CD8-positive, alpha-beta T cell (primary cell): ENCODE measurements at regions of chr19 and their contacts with region 1.

Region 1: DNA sequence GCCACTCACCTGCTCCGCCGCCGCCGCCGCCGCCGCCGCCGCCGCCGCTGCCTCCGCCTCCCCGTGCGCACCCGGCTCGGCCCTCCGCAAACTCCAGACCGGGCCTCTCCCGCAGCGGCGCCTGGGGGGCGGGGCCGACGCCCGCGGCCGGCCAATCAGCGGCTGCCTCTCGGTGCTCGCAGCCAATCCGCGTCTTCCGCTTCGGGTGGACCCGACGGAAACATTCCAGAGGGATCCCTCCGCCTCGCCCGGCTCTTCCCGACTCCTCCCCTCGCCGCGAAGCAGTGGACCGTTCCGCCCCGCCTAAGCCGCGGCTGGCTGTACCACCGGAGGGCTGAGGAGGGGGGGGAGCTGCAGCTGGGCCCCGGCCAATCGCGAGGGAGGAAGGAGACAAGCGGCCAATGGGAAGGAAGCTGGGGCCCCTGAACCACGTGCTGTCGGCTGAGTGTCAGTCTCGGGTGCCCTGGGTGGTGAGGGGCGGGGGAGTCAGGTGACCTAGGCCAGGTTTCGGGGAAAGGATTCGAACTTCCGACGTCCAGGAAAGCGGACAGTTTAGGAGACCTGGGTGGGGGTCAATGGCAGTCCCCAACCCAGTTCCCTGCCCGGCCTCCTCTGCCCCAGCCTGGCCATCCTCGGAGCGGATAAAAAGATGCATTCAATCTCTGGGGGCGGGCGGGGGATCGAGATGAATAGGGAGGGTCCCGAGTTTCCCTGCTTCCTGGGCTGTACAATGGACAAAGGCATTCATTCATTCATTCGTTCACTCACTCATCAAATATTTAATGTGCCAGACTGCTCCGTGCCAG is at the start of gene GIPC1:
- DNase-seq: peak; percentile 53 to 89 (median 80)
- ATAC-seq: peak; percentile 86
- H3K4me3 ChIP-seq: peak within 1 kb of the TSS; percentile 62 to 97
- H3K4me3 Mint-ChIP-seq: peak within 1 kb of the TSS; percentile 81
- H3K27ac ChIP-seq: peak within 1 kb of the TSS; percentile 42 to 58
- H3K27ac Mint-ChIP-seq: peak within 1 kb of the TSS; percentile 90
- H3K4me1 ChIP-seq: peaks cover 19% of the 10 kb centered on the region
- H3K4me1 Mint-ChIP-seq: peaks cover 24% of the 10 kb centered on the region
- H3K27me3 ChIP-seq: no peaks in the 10 kb centered on the region
- H3K27me3 Mint-ChIP-seq: no peaks in the 10 kb centered on the region
- CTCF ChIP-seq: no peak
- total RNA-seq, gene GIPC1: 15.6 to 16.0 TPM

Region 2: DNA sequence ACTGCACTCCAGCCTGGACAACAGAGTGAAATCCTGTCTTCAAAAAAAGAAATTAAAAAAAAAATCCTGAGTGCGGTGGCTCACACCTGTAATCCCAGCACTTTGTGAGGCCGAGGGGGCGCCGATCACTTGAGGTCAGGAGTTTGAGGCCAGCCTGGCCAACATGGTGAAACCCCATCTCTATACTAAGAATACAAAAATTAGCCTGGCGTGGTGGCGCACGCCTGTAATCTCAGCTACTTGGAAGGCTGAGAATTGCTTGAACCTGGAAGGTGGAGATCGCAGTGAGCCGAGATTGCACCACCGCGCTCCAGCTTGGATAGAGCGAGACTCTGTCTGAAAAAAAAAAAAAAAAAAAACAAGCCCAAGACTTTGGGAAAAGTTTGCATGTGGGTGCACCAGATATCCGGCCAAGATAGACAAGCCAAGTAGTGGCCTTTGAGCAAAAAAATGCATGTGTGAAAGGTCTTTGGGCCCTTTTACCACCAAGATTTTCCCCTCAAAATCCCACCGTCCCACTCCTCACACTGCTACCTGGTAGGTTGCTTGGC is 16.3 kb after region 1 on chr19:
- CTCF ChIA-PET with region 1: interaction called, 3 read pairs
- POLR2A ChIA-PET with region 1: interaction called, 26 read pairs
- intact Hi-C with region 1: loop called (anchors 1 kb)
- DNase-seq: no peak
- ATAC-seq: no peak
- H3K4me3 ChIP-seq: no peak overlapping the region
- H3K4me3 Mint-ChIP-seq: no peak overlapping the region
- H3K27ac ChIP-seq: no peak overlapping the region
- H3K27ac Mint-ChIP-seq: peak overlapping the region; percentile 41
- H3K4me1 ChIP-seq: peaks cover 48% of the 10 kb centered on the region
- H3K4me1 Mint-ChIP-seq: peaks cover 58% of the 10 kb centered on the region
- H3K27me3 ChIP-seq: no peaks in the 10 kb centered on the region
- H3K27me3 Mint-ChIP-seq: no peaks in the 10 kb centered on the region
- CTCF ChIP-seq: no peak

Region 3: GRCh38 chr19:14536926-14537692 is 40.9 kb after region 1 on chr19:
- CTCF ChIA-PET with region 1: no interaction called
- POLR2A ChIA-PET with region 1: no interaction called
- intact Hi-C with region 1: no loop called
- DNase-seq: peak in 4 of 9 experiments; percentile 49 to 67 (median 56)
- ATAC-seq: peak; percentile 80
- H3K4me3 ChIP-seq: no peak overlapping the region
- H3K4me3 Mint-ChIP-seq: no peak overlapping the region
- H3K27ac ChIP-seq: no peak overlapping the region
- H3K27ac Mint-ChIP-seq: no peak overlapping the region
- H3K4me1 ChIP-seq: peaks cover 20% of the 10 kb centered on the region
- H3K4me1 Mint-ChIP-seq: peaks cover 46% of the 10 kb centered on the region
- H3K27me3 ChIP-seq: no peaks in the 10 kb centered on the region
- H3K27me3 Mint-ChIP-seq: no peaks in the 10 kb centered on the region
- CTCF ChIP-seq: no peak

Region 4: GRCh38 chr19:14972676-14973075 is 476.4 kb after region 1 on chr19:
- CTCF ChIA-PET with region 1: no interaction called
- POLR2A ChIA-PET with region 1: no interaction called
- intact Hi-C with region 1: no loop called
- DNase-seq: no peak
- ATAC-seq: no peak
- H3K4me3 ChIP-seq: no peak overlapping the region
- H3K4me3 Mint-ChIP-seq: no peak overlapping the region
- H3K27ac ChIP-seq: no peak overlapping the region
- H3K27ac Mint-ChIP-seq: no peak overlapping the region
- H3K4me1 ChIP-seq: no peaks in the 10 kb centered on the region
- H3K4me1 Mint-ChIP-seq: no peaks in the 10 kb centered on the region
- H3K27me3 ChIP-seq: peaks cover 0 to 6% of the 10 kb centered on the region in 2 experiments
- H3K27me3 Mint-ChIP-seq: peaks cover 50% of the 10 kb centered on the region
- CTCF ChIP-seq: no peak

Region 5: DNA sequence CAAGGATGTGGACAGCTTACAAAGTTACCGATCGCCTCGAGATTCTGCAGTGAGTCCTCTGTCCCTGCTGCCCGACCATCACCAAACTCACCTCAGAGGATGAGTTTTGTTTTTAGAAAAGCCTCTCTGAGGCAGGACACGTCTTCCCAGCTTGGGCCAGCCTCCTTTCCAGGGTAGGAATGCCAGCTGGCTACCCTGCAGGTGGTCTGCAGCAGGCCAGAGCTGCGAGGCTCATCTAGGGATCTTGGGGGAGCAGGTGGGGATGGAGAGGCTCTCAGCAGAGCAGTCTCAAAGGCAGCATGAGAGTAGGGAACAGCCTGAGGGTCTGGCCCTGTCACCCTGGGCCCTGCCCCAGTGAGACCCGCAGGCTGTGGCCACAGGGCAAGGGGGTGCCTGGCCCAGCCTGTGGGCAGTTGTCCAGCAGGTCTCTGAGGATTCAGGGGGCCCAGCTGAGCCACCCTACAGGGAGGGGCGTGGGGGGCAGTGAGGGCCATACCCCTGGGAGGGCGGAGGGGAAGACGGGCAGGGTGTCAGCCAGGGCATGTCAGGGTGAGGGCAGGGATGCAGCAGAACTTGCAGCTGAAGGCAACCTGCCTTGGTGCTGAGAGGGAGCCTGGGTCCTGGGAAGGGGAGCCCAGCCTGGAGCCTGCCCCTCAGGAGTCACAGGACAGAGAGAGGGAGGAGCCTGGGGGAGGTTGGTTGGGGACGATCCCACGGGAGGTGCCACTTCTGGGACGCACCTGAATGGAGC is 1522.7 kb after region 1 on chr19:
- CTCF ChIA-PET with region 1: no interaction called
- POLR2A ChIA-PET with region 1: no interaction called
- intact Hi-C with region 1: no loop called
- DNase-seq: no peak
- ATAC-seq: no peak
- H3K4me3 ChIP-seq: no peak overlapping the region
- H3K4me3 Mint-ChIP-seq: no peak overlapping the region
- H3K27ac ChIP-seq: no peak overlapping the region
- H3K27ac Mint-ChIP-seq: no peak overlapping the region
- H3K4me1 ChIP-seq: no peaks in the 10 kb centered on the region
- H3K4me1 Mint-ChIP-seq: no peaks in the 10 kb centered on the region
- H3K27me3 ChIP-seq: no peaks in the 10 kb centered on the region
- H3K27me3 Mint-ChIP-seq: no peaks in the 10 kb centered on the region
- CTCF ChIP-seq: no peak